ENCODE measurements at regions of chr1 and their contacts with region 1.

Region 1: GRCh38 chr1:246506674-246507481 is at the start of gene SMYD3:
- DNase-seq: peak; percentile 88
- ATAC-seq: peak; percentile 60
- H3K4me3 ChIP-seq: peak within 1 kb of the TSS; percentile 85
- H3K27ac ChIP-seq: no peak within 1 kb of the TSS
- H3K4me1 ChIP-seq: peaks cover 42% of the 10 kb centered on the region
- H3K27me3 ChIP-seq: no peaks in the 10 kb centered on the region
- CTCF ChIP-seq: peak; percentile 33; the same call in 1 of the 2 replicates
- total RNA-seq, gene SMYD3: 33.0 and 40.3 TPM in 2 replicates

Region 2: DNA sequence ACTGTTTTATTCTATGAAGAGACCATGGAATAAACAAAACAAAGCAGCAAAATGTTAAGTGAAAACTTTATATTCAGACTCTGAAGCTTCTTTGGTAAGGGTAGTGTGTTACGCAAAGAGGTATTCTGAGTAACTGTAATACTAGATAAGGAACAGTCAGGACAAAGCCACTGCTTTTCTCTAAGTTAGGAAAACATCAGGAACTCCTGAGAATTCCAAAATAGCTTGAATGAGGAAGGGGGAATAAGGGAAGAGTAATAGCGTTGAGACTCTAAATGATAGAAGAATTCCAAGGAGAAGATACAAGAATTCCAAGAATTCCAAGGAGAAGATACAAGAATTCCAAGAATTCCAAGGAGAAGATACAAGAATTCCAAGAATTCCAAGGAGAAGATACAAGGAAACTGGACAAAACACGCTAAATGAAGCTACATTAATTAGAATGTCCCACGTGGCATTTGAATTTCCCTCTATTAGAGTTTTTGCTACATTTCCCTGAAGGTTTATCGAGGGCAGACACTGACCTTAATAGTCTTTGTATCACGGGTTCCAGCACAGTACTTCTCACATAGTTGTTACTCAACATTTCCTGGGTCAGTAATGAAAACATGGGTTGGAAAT is 71.3 kb before region 1 on chr1:
- CTCF ChIA-PET with region 1: no interaction called
- POLR2A ChIA-PET with region 1: no interaction called
- intact Hi-C with region 1: no loop called
- DNase-seq: no peak
- ATAC-seq: no peak
- H3K4me3 ChIP-seq: no peak overlapping the region
- H3K27ac ChIP-seq: no peak overlapping the region
- H3K4me1 ChIP-seq: no peaks in the 10 kb centered on the region
- H3K27me3 ChIP-seq: no peaks in the 10 kb centered on the region
- CTCF ChIP-seq: no peak

Region 3: DNA sequence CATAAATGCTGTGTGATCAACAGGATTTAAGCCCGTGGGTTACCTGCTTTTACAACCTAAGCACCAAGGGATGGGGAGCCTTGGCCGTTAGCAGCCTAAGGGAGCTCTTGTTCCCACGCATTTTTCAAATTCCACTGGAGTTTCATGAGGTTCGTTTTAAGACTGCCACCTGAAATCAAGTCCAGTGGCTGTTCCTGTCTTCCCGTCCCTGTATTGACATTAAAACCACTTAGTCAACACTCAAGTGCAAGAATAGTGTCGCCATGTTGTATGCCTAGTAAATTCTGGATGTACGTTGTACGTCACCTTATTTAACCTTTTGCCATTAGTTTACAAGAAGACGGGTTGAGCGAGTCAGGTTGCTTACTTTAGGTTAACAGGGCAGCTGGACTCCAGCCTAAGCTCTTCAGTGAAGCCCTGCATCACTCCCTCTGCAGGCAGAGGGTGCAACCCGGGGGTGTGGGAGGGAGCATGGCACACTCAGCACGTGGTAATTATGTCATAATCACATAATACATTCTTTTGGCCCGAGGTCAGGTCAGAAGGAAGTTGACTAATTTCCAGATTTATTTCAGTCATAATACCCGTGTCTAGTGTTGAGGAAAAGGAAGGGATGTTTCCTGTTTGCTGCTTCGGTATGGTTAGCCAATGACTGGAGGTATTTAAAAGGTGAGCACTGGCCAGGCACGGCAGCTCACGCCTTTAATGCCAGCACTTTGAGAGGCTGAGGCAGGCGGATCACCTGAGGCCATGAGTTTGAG is 101.9 kb after region 1 on chr1:
- CTCF ChIA-PET with region 1: interaction called, 14 read pairs
- POLR2A ChIA-PET with region 1: no interaction called
- intact Hi-C with region 1: loop called (anchors 1 kb)
- DNase-seq: peak; percentile 99
- ATAC-seq: peak; percentile 91
- H3K4me3 ChIP-seq: peak overlapping the region; percentile 17
- H3K27ac ChIP-seq: peak overlapping the region; percentile 75
- H3K4me1 ChIP-seq: peaks cover 18% of the 10 kb centered on the region
- H3K27me3 ChIP-seq: no peaks in the 10 kb centered on the region
- CTCF ChIP-seq: peak; percentile 44

Region 4: GRCh38 chr1:246617768-246618167 is 110.9 kb after region 1 on chr1:
- CTCF ChIA-PET with region 1: no interaction called
- POLR2A ChIA-PET with region 1: no interaction called
- intact Hi-C with region 1: loop called (anchors 1 kb)
- DNase-seq: no peak
- ATAC-seq: 0 out of 2 replicates have a peak, but pooled peaks have one; percentile 11
- H3K4me3 ChIP-seq: no peak overlapping the region
- H3K27ac ChIP-seq: peak overlapping the region; percentile 27
- H3K4me1 ChIP-seq: peaks cover 18% of the 10 kb centered on the region
- H3K27me3 ChIP-seq: no peaks in the 10 kb centered on the region
- CTCF ChIP-seq: no peak

Region 5: GRCh38 chr1:246753670-246754535 is 247.0 kb after region 1 on chr1:
- CTCF ChIA-PET with region 1: no interaction called
- POLR2A ChIA-PET with region 1: no interaction called
- intact Hi-C with region 1: loop called (anchors 1 kb)
- DNase-seq: peak; percentile 81
- ATAC-seq: peak; percentile 95
- H3K4me3 ChIP-seq: no peak overlapping the region
- H3K27ac ChIP-seq: no peak overlapping the region
- H3K4me1 ChIP-seq: no peaks in the 10 kb centered on the region
- H3K27me3 ChIP-seq: no peaks in the 10 kb centered on the region
- CTCF ChIP-seq: peak; percentile 94